ENCODE measurements at regions of chr4 and their contacts with region 1.

Region 1: GRCh38 chr4:10535912-10536311 is 78.7 kb upstream of the ZNF518B start:
- DNase-seq: no peak
- H3K4me3 ChIP-seq: no peak overlapping the region
- H3K4me3 Mint-ChIP-seq: no peak overlapping the region
- H3K27ac ChIP-seq: no peak overlapping the region
- H3K27ac Mint-ChIP-seq: no peak overlapping the region
- H3K4me1 ChIP-seq: no peaks in the 10 kb centered on the region
- H3K4me1 Mint-ChIP-seq: no peaks in the 10 kb centered on the region
- H3K27me3 ChIP-seq: no peaks in the 10 kb centered on the region
- H3K27me3 Mint-ChIP-seq: peaks cover 8 to 35% of the 10 kb centered on the region in 2 donors

Region 2: DNA sequence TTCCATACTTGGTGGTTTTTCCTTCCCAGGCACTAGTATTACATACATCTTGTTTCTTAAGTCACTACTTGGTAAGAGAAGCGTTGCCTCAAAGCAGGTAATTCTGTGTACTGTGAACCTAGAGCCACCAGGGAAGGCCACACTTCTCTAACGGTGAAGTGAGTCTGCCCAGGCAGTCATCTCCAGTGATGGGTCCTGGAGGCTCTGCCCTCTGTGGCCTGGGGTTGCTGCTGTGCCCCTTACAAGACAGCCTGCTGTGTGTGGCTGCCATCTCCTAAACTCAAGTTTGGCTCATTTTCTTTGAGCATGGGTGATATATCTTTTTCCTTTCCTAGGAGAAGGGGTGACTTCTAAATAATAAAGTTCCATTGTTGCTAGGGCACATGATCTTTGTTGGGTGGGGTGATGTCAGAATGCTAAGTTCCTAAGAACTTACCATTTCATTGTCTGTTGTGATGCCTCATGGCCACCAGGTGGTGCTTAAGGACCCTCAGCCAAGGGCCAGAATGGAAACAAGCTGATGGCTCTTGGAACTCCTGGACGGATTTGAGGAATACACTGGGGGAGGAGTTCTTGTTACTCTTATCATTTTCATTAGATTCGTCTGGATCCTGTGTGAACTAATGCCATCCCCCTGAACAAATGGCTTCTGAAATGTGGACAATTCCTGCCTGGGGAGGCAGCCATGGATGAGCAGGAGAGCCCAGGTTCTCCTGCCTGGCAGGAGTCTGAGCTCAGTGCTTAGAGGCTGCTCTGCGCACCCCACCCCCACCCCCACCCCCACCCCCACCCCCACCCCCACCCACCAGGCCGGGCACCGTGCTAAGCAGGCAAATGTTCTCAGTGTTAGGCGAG is 378.2 kb before region 1 on chr4:
- CTCF ChIA-PET with region 1: interaction called, 42 read pairs
- POLR2A ChIA-PET with region 1: no interaction called
- DNase-seq: peak in 3 of 5 donors; percentile 11 to 57 (median 29)
- H3K4me3 ChIP-seq: no peak overlapping the region
- H3K4me3 Mint-ChIP-seq: no peak overlapping the region
- H3K27ac ChIP-seq: no peak overlapping the region
- H3K27ac Mint-ChIP-seq: no peak overlapping the region
- H3K4me1 ChIP-seq: peaks cover 31% of the 10 kb centered on the region
- H3K4me1 Mint-ChIP-seq: peaks cover 21 to 32% (median 26%) of the 10 kb centered on the region in 3 donors
- H3K27me3 ChIP-seq: no peaks in the 10 kb centered on the region
- H3K27me3 Mint-ChIP-seq: peaks cover 0 to 4% of the 10 kb centered on the region in 2 donors

Region 3: GRCh38 chr4:10336471-10336870 is 199.4 kb before region 1 on chr4:
- CTCF ChIA-PET with region 1: no interaction called
- POLR2A ChIA-PET with region 1: no interaction called
- DNase-seq: no peak
- H3K4me3 ChIP-seq: no peak overlapping the region
- H3K4me3 Mint-ChIP-seq: no peak overlapping the region
- H3K27ac ChIP-seq: no peak overlapping the region
- H3K27ac Mint-ChIP-seq: no peak overlapping the region
- H3K4me1 ChIP-seq: no peaks in the 10 kb centered on the region
- H3K4me1 Mint-ChIP-seq: no peaks in the 10 kb centered on the region
- H3K27me3 ChIP-seq: no peaks in the 10 kb centered on the region
- H3K27me3 Mint-ChIP-seq: peaks cover 10 to 46% of the 10 kb centered on the region in 2 donors

Region 4: GRCh38 chr4:10577018-10577417 is 41.1 kb after region 1 on chr4:
- CTCF ChIA-PET with region 1: no interaction called
- POLR2A ChIA-PET with region 1: no interaction called
- DNase-seq: no peak
- H3K4me3 ChIP-seq: no peak overlapping the region
- H3K4me3 Mint-ChIP-seq: no peak overlapping the region
- H3K27ac ChIP-seq: no peak overlapping the region
- H3K27ac Mint-ChIP-seq: peak overlapping the region in 1 of 8 donors; percentile 40
- H3K4me1 ChIP-seq: no peaks in the 10 kb centered on the region
- H3K4me1 Mint-ChIP-seq: peaks cover 0 to 4% (median 3%) of the 10 kb centered on the region in 3 donors
- H3K27me3 ChIP-seq: no peaks in the 10 kb centered on the region
- H3K27me3 Mint-ChIP-seq: peaks cover 7% of the 10 kb centered on the region in 2 donors